Activated naive CD4-positive, alpha-beta T cell treated with anti-CD3 and anti-CD28 coated beads for 36 hours (primary cell): ENCODE measurements at regions of chr17 and their contacts with region 1.

Region 1: DNA sequence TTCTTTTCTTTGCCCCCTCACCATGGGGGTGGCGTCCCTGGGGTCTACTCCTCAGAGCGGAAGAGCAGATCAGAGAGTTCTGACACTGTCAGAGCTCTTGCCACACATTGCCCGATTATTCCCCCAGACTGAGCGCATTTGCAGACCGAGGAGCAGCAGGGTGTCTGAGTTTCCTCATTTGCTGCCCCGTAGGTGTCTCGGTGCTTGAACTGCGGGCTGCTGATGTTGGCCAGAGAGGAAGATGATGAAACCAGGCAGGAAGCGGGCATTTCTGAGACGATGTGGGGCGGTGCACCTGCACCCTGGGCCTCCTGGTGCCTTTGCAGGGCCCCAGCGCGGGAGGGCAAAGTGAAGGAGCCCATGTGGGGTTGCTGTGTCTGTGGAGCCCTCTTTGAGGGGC is 55.2 kb downstream of the ARSG start:
- DNase-seq: peak; percentile 87
- H3K4me3 Mint-ChIP-seq: peak overlapping the region; percentile 75
- H3K27ac Mint-ChIP-seq: peak overlapping the region; percentile 91
- H3K4me1 Mint-ChIP-seq: peaks cover 66% of the 10 kb centered on the region
- H3K27me3 Mint-ChIP-seq: no peaks in the 10 kb centered on the region

Region 2: DNA sequence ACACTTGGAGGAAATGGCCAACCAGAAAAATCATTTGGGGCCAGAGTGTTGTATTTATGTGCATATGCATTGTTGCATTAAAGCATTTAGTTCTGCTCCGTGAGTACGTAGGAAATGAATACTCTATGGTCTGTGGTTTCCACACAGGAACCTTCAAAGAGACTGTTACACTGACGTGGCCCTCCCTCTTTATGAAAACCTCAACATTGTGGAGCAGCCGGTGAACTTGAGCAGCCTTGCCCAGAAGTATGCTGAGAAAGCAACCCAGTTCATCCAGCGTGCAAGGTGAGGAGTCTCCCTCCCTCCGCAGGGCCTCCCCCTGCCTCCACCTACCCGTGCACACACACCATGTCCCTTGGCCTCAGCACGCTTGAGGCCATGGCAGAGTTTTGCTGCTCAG is 10.1 kb after region 1 on chr17:
- CTCF ChIA-PET with region 1: interaction called, 3 read pairs
- intact Hi-C with region 1: loop called (anchors 1 kb)
- DNase-seq: peak; percentile 85
- H3K4me3 Mint-ChIP-seq: no peak overlapping the region
- H3K27ac Mint-ChIP-seq: peak overlapping the region; percentile 46
- H3K4me1 Mint-ChIP-seq: peaks cover 49% of the 10 kb centered on the region
- H3K27me3 Mint-ChIP-seq: no peaks in the 10 kb centered on the region

Region 3: DNA sequence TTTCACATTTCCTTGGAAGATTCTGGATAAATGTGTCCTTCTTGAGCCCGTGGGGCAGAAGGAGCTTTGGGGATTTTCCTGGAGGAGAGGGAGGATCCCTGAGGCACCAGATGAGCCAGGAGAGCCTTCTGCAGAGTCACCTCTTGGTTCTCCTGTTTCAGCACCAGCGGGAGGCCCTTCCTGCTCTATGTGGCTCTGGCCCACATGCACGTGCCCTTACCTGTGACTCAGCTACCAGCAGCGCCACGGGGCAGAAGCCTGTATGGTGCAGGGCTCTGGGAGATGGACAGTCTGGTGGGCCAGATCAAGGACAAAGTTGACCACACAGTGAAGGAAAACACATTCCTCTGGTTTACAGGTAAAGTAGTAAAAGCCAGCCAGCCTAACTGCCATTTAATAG is 21.9 kb after region 1 on chr17:
- CTCF ChIA-PET with region 1: no interaction called
- intact Hi-C with region 1: no loop called
- DNase-seq: no peak
- H3K4me3 Mint-ChIP-seq: no peak overlapping the region
- H3K27ac Mint-ChIP-seq: no peak overlapping the region
- H3K4me1 Mint-ChIP-seq: no peaks in the 10 kb centered on the region
- H3K27me3 Mint-ChIP-seq: no peaks in the 10 kb centered on the region

Region 4: GRCh38 chr17:68420065-68420464 is 73.6 kb after region 1 on chr17:
- CTCF ChIA-PET with region 1: no interaction called
- intact Hi-C with region 1: loop called (anchors 2 kb)
- DNase-seq: no peak
- H3K4me3 Mint-ChIP-seq: no peak overlapping the region
- H3K27ac Mint-ChIP-seq: no peak overlapping the region
- H3K4me1 Mint-ChIP-seq: peaks cover 15% of the 10 kb centered on the region
- H3K27me3 Mint-ChIP-seq: no peaks in the 10 kb centered on the region